CD8-positive, alpha-beta T cell (primary cell): ENCODE measurements at regions of chr12 and their contacts with region 1.

Region 1: GRCh38 chr12:124466216-124467128 is 100.9 kb downstream of the NCOR2 start:
- DNase-seq: peak; percentile 81 to 96 (median 90)
- ATAC-seq: peak; percentile 95
- H3K4me3 ChIP-seq: peak overlapping the region; percentile 62 to 64
- H3K4me3 Mint-ChIP-seq: peak overlapping the region; percentile 78
- H3K27ac ChIP-seq: peak overlapping the region; percentile 49 to 85
- H3K27ac Mint-ChIP-seq: peak overlapping the region; percentile 91
- H3K4me1 ChIP-seq: peaks cover 25% of the 10 kb centered on the region
- H3K4me1 Mint-ChIP-seq: peaks cover 47% of the 10 kb centered on the region
- H3K27me3 ChIP-seq: no peaks in the 10 kb centered on the region
- H3K27me3 Mint-ChIP-seq: no peaks in the 10 kb centered on the region
- CTCF ChIP-seq: peak; percentile 68

Region 2: GRCh38 chr12:123972457-123973401 is 493.7 kb before region 1 on chr12 and contains the starts of genes CCDC92 and ZNF664:
- CTCF ChIA-PET with region 1: no interaction called
- POLR2A ChIA-PET with region 1: no interaction called
- intact Hi-C with region 1: loop called in 1 of 2 experiments (anchors 5 kb)
- DNase-seq: peak; percentile 88 to 98 (median 95)
- ATAC-seq: peak; percentile 75
- H3K4me3 ChIP-seq: peak within 1 kb of the TSS; percentile 60 to 63
- H3K4me3 Mint-ChIP-seq: peak within 1 kb of the TSS; percentile 91
- H3K27ac ChIP-seq: peak within 1 kb of the TSS; percentile 34 to 44
- H3K27ac Mint-ChIP-seq: peak within 1 kb of the TSS; percentile 89
- H3K4me1 ChIP-seq: peaks cover 19% of the 10 kb centered on the region
- H3K4me1 Mint-ChIP-seq: peaks cover 36% of the 10 kb centered on the region
- H3K27me3 ChIP-seq: no peaks in the 10 kb centered on the region
- H3K27me3 Mint-ChIP-seq: no peaks in the 10 kb centered on the region
- CTCF ChIP-seq: no peak
- total RNA-seq, gene CCDC92: 6.9 to 8.1 TPM
- total RNA-seq, gene ZNF664: 14.2 to 17.9 TPM

Region 3: DNA sequence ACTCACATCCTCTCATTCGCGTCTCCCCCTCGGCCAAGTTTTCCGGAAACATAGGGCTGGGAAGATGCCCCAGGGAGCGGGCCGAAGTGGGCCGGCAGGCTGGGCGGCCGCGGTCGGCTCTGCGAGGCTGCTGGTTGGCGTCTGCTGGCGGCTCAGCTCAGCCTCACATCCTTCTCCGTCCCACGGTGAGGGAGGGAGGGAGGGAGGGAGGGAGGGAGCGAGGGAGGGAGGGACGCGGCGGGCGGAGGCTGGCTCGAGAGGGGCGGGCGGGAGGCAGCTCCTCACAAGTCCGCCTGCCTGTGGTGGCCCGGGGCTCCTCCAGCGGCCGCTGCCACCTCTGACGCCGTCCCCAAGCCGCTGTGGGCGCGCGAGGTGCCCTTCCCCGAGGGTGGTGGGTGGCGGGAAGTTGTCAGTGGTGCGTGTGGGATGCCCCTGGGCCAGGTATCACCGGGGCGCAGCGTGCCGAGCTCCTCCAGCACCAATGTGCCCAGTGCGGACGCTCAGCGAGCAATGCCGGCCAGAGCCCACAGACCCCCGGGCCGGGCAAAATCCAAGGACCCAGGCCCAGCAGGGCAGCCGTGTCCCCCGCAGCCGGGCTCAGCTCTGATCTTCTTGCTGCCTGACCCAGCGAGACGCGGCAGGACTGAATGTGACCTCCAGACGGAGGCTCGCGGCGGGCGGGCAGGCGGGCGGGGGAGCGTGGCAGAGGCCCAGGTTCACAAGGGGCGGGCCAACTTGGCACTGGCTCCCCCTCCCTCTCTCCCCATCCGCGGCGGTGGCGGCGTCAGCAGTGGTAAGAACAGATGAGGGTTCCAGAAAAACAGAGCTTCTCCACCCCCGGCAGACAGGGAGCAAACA is 77.6 kb before region 1 on chr12:
- CTCF ChIA-PET with region 1: no interaction called
- POLR2A ChIA-PET with region 1: no interaction called
- intact Hi-C with region 1: loop called (anchors 2 to 5 kb)
- DNase-seq: peak; percentile 28 to 84 (median 75)
- ATAC-seq: peak; percentile 84
- H3K4me3 ChIP-seq: peak overlapping the region; percentile 45 to 59
- H3K4me3 Mint-ChIP-seq: peak overlapping the region; percentile 69
- H3K27ac ChIP-seq: no peak overlapping the region
- H3K27ac Mint-ChIP-seq: peak overlapping the region; percentile 71
- H3K4me1 ChIP-seq: peaks cover 27% of the 10 kb centered on the region
- H3K4me1 Mint-ChIP-seq: peaks cover 32% of the 10 kb centered on the region
- H3K27me3 ChIP-seq: no peaks in the 10 kb centered on the region
- H3K27me3 Mint-ChIP-seq: no peaks in the 10 kb centered on the region
- CTCF ChIP-seq: no peak

Region 4: DNA sequence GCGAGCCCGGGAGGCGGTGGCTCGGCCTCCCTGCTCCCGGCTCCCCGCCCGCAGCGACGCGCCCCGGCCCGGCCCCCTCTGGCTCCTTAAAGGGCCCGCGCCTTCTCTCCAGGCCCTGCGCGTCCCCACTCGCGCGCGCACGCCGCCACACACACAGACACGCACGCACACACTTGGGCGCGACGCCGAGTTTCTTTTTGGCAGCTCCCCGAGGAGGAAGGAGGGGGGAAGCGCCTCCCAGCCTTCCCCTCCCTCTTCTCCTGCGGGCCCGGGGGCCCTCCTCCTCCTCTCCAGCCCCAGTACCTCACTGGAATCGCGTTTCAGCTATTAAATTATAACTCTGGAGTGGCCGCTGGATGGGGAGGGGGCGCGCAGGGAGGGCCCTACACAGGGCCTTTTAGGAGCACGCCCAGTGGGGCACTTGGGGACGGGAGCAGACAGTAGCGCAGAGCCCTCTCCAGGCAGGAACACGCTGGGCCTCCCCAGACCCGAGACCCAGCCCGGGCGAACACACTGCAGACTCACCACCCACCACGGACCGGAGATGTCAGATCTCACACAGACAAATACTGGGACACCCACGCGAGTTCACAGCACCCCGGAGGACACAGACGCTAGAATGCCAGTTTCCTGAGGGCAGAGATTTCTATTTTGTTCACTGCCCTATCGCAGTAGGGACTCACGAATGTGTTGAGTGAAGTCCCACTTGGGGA is 101.3 kb after region 1 on chr12:
- CTCF ChIA-PET with region 1: no interaction called
- POLR2A ChIA-PET with region 1: interaction called, 3 read pairs
- intact Hi-C with region 1: loop called in 1 of 2 experiments (anchors 1 kb)
- DNase-seq: peak; percentile 59 to 91 (median 79)
- ATAC-seq: peak; percentile 65
- H3K4me3 ChIP-seq: peak overlapping the region; percentile 66 to 84
- H3K4me3 Mint-ChIP-seq: peak overlapping the region; percentile 85
- H3K27ac ChIP-seq: peak overlapping the region; percentile 1 to 23
- H3K27ac Mint-ChIP-seq: peak overlapping the region; percentile 67
- H3K4me1 ChIP-seq: peaks cover 32% of the 10 kb centered on the region
- H3K4me1 Mint-ChIP-seq: peaks cover 28% of the 10 kb centered on the region
- H3K27me3 ChIP-seq: no peaks in the 10 kb centered on the region
- H3K27me3 Mint-ChIP-seq: no peaks in the 10 kb centered on the region
- CTCF ChIP-seq: no peak

Region 5: GRCh38 chr12:124713436-124714082 is 247.1 kb after region 1 on chr12:
- CTCF ChIA-PET with region 1: no interaction called
- POLR2A ChIA-PET with region 1: no interaction called
- intact Hi-C with region 1: loop called in 1 of 2 experiments (anchors 5 kb)
- DNase-seq: peak in 8 of 9 experiments; percentile 32 to 85 (median 54)
- ATAC-seq: peak; percentile 90
- H3K4me3 ChIP-seq: peak overlapping the region; percentile 40 to 42
- H3K4me3 Mint-ChIP-seq: peak overlapping the region; percentile 76
- H3K27ac ChIP-seq: peak overlapping the region in 1 of 2 experiments; percentile 43
- H3K27ac Mint-ChIP-seq: peak overlapping the region; percentile 81
- H3K4me1 ChIP-seq: peaks cover 16% of the 10 kb centered on the region
- H3K4me1 Mint-ChIP-seq: peaks cover 17% of the 10 kb centered on the region
- H3K27me3 ChIP-seq: no peaks in the 10 kb centered on the region
- H3K27me3 Mint-ChIP-seq: no peaks in the 10 kb centered on the region
- CTCF ChIP-seq: no peak

Region 6: DNA sequence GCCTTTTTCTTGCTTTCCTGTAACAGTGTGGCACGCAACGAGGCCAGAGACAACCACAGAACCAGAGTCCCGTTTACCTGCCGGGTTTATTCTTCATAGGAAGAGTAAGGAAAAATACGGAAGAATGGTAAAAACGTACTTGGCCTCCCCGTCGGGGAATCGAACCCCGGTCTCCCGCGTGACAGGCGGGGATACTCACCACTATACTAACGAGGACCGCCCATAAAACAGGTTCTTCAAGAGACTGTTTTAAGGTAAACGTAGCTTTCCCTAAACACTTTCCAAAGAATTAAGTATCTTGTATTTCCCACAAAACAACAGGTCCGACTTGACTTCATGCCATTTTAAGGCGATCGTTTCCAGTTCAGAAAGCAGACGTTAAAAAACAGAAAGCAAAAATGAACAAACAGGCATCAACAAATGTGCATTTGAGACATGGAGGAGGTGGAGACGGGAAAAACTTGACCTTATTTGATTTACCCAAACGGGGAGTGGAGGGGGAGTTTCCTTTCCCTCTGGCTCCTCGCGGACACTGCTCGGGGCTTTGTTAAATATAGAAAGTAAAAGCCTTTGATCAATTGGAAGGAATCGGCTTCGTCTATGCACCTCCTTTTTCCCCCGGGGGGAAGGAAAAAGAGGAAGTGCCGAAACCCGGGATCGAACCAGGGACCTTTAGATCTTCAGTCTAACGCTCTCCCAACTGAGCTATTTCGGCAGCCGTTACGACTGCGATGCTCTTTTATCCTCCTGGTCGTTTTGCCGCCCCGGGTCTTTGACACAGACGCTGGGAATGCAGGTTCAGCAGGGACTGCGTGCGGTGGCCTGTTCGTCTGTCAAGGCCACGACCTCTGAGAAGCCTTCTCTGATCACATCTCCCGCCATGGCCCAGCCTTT is 461.0 kb after region 1 on chr12:
- CTCF ChIA-PET with region 1: no interaction called
- POLR2A ChIA-PET with region 1: no interaction called
- intact Hi-C with region 1: loop called in 1 of 2 experiments (anchors 10 kb)
- DNase-seq: peak; percentile 84 to 96 (median 91)
- ATAC-seq: peak; percentile 84
- H3K4me3 ChIP-seq: peak overlapping the region; percentile 71
- H3K4me3 Mint-ChIP-seq: peak overlapping the region; percentile 93
- H3K27ac ChIP-seq: peak overlapping the region; percentile 51 to 55
- H3K27ac Mint-ChIP-seq: peak overlapping the region; percentile 96
- H3K4me1 ChIP-seq: peaks cover 18% of the 10 kb centered on the region
- H3K4me1 Mint-ChIP-seq: peaks cover 22% of the 10 kb centered on the region
- H3K27me3 ChIP-seq: no peaks in the 10 kb centered on the region
- H3K27me3 Mint-ChIP-seq: no peaks in the 10 kb centered on the region
- CTCF ChIP-seq: no peak